B cell (primary cell): ENCODE measurements at regions of chr6 and their contacts with region 1.

Region 1: GRCh38 chr6:336159-337019 is 44.1 kb downstream of the DUSP22 start:
- DNase-seq: peak; percentile 80
- ATAC-seq: peak; percentile 58
- H3K4me3 ChIP-seq: peak overlapping the region in 3 of 5 experiments; percentile 10 to 47 (median 19)
- H3K4me3 Mint-ChIP-seq: peak overlapping the region; percentile 76
- H3K27ac ChIP-seq: peak overlapping the region; percentile 79 to 84
- H3K27ac Mint-ChIP-seq: peak overlapping the region; percentile 90
- H3K4me1 ChIP-seq: peaks cover 85 to 94% of the 10 kb centered on the region in 2 donors
- H3K4me1 Mint-ChIP-seq: peaks cover 59% of the 10 kb centered on the region
- H3K27me3 ChIP-seq: no peaks in the 10 kb centered on the region
- H3K27me3 Mint-ChIP-seq: no peaks in the 10 kb centered on the region
- CTCF ChIP-seq: no peak

Region 2: GRCh38 chr6:319177-320131 is 16.9 kb before region 1 on chr6:
- CTCF ChIA-PET with region 1: interaction called, 11 read pairs
- POLR2A ChIA-PET with region 1: interaction called, 3 read pairs
- intact Hi-C with region 1: loop called (anchors 2 kb)
- DNase-seq: no peak
- ATAC-seq: no peak
- H3K4me3 ChIP-seq: no peak overlapping the region
- H3K4me3 Mint-ChIP-seq: peak overlapping the region; percentile 40
- H3K27ac ChIP-seq: peak overlapping the region in 1 of 2 donors; percentile 13
- H3K27ac Mint-ChIP-seq: peak overlapping the region; percentile 73
- H3K4me1 ChIP-seq: peaks cover 90 to 94% of the 10 kb centered on the region in 2 donors
- H3K4me1 Mint-ChIP-seq: peaks cover 46% of the 10 kb centered on the region
- H3K27me3 ChIP-seq: no peaks in the 10 kb centered on the region
- H3K27me3 Mint-ChIP-seq: no peaks in the 10 kb centered on the region
- CTCF ChIP-seq: no peak

Region 3: GRCh38 chr6:356828-357251 is 20.5 kb after region 1 on chr6:
- CTCF ChIA-PET with region 1: interaction called, 3 read pairs
- POLR2A ChIA-PET with region 1: interaction called, 3 read pairs
- intact Hi-C with region 1: loop called (anchors 2 kb)
- DNase-seq: peak; percentile 79
- ATAC-seq: peak; percentile 81
- H3K4me3 ChIP-seq: no peak overlapping the region
- H3K4me3 Mint-ChIP-seq: peak overlapping the region; percentile 77
- H3K27ac ChIP-seq: peak overlapping the region; percentile 42 to 75
- H3K27ac Mint-ChIP-seq: peak overlapping the region; percentile 98
- H3K4me1 ChIP-seq: peaks cover 48 to 69% of the 10 kb centered on the region in 2 donors
- H3K4me1 Mint-ChIP-seq: peaks cover 66% of the 10 kb centered on the region
- H3K27me3 ChIP-seq: no peaks in the 10 kb centered on the region
- H3K27me3 Mint-ChIP-seq: no peaks in the 10 kb centered on the region
- CTCF ChIP-seq: no peak

Region 4: GRCh38 chr6:379367-380181 is 43.2 kb after region 1 on chr6:
- CTCF ChIA-PET with region 1: interaction called, 3 read pairs
- POLR2A ChIA-PET with region 1: no interaction called
- intact Hi-C with region 1: loop called (anchors 5 kb)
- DNase-seq: peak; percentile 57
- ATAC-seq: peak; percentile 37
- H3K4me3 ChIP-seq: no peak overlapping the region
- H3K4me3 Mint-ChIP-seq: peak overlapping the region; percentile 26
- H3K27ac ChIP-seq: no peak overlapping the region
- H3K27ac Mint-ChIP-seq: peak overlapping the region; percentile 56
- H3K4me1 ChIP-seq: peaks cover 44 to 46% of the 10 kb centered on the region in 2 donors
- H3K4me1 Mint-ChIP-seq: peaks cover 42% of the 10 kb centered on the region
- H3K27me3 ChIP-seq: no peaks in the 10 kb centered on the region
- H3K27me3 Mint-ChIP-seq: no peaks in the 10 kb centered on the region
- CTCF ChIP-seq: no peak

Region 5: GRCh38 chr6:815348-815738 is 479.0 kb after region 1 on chr6:
- CTCF ChIA-PET with region 1: no interaction called
- POLR2A ChIA-PET with region 1: no interaction called
- intact Hi-C with region 1: no loop called
- DNase-seq: no peak
- ATAC-seq: no peak
- H3K4me3 ChIP-seq: peak overlapping the region in 4 of 5 experiments; percentile 26 to 62 (median 50)
- H3K4me3 Mint-ChIP-seq: peak overlapping the region; percentile 75
- H3K27ac ChIP-seq: peak overlapping the region; percentile 15 to 81
- H3K27ac Mint-ChIP-seq: no peak overlapping the region
- H3K4me1 ChIP-seq: peaks cover 41 to 46% of the 10 kb centered on the region in 2 donors
- H3K4me1 Mint-ChIP-seq: peaks cover 35% of the 10 kb centered on the region
- H3K27me3 ChIP-seq: no peaks in the 10 kb centered on the region
- H3K27me3 Mint-ChIP-seq: peaks cover 8% of the 10 kb centered on the region
- CTCF ChIP-seq: no peak

Region 6: DNA sequence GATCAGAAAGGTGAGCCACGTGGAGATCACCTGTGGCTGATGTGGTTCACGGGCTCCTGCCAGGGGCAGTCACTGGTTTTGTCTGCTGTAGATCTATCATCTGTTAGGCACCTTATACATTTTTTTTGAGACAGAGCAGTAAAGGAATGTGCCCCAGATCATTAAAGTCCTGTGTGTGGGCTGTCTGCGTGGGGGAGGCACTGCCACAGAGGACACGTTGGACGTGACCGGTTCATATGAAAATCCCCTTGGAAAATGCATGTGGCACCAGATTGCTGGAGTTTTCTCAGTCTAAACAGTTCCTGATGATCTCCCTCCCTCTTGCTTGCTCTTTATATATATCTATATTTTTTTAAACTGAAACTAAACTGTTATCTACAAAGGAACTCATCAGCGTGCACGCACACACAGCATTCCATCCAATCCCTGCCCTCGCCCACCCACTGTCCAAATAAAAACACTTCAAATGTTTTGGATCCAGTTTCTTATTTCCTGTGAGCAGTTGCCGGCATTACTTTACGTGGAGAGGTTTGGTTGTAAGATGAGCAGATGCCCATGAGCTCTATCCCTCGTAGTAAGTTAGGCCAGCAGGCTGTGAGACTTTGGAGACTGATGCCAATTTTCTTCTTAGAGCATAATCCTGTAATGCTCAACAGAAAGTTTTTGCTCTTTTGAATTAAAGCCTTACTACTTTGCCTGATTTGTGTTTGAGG is 518.2 kb after region 1 on chr6:
- CTCF ChIA-PET with region 1: no interaction called
- POLR2A ChIA-PET with region 1: interaction called, 10 read pairs
- intact Hi-C with region 1: no loop called
- DNase-seq: no peak
- ATAC-seq: no peak
- H3K4me3 ChIP-seq: no peak overlapping the region
- H3K4me3 Mint-ChIP-seq: no peak overlapping the region
- H3K27ac ChIP-seq: no peak overlapping the region
- H3K27ac Mint-ChIP-seq: no peak overlapping the region
- H3K4me1 ChIP-seq: no peaks in the 10 kb centered on the region
- H3K4me1 Mint-ChIP-seq: peaks cover 4% of the 10 kb centered on the region
- H3K27me3 ChIP-seq: no peaks in the 10 kb centered on the region
- H3K27me3 Mint-ChIP-seq: peaks cover 11% of the 10 kb centered on the region
- CTCF ChIP-seq: no peak